IMR-90 (cell line): ENCODE measurements at regions of chr11 and their contacts with region 1.

Region 1: GRCh38 chr11:1148752-1149180 is 9.0 kb upstream of the MUC5AC start:
- DNase-seq: no peak
- ATAC-seq: no peak
- H3K4me3 ChIP-seq: no peak overlapping the region
- H3K27ac ChIP-seq: no peak overlapping the region
- H3K4me1 ChIP-seq: peaks cover 34% of the 10 kb centered on the region
- H3K27me3 ChIP-seq: no peaks in the 10 kb centered on the region
- CTCF ChIP-seq: no peak
- POLR2A ChIP-seq: no peak
- RAD21 ChIP-seq: no peak

Region 2: DNA sequence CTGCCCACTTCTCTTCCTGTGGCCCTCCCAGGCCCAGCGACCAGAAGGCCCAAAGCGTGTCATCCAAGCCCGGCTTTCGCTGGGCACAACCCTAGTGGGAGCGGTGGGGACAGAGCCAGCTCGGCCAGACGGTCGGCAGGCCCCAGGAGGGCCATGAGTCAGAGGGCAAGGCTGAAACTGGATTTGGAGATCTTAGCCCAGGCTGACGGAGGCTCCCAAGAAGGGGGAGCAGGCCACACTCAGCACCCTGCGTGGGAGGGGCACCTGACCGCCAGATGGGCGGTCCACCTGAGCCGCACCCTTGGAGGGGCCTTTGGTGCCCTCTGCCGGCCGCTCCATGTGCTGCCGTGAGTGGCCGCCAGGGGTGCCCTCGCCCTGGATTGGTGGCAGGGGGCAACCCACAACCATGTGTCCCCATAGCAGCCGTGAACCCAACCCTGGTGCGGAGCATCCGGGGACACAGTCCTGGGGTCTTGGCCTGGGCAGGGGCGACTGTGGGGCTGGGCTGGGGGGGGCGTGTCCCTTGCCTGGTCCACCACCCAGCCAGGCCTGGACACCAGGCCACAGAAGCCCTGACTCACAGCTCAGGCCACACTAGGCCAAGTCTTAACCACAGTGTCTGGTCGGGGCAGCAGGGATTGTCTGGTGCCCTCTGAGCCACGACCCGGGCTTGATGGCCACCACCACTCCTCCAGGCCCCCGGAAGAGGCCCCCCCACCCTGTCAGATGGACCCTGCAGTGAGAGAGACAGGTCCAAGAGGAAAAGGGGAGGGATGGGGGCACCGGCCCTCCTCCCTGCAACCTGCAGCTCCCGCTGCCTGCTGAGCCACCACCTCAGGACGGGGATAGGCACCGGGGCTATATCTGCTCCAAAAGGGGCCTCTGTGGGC is 420.7 kb before region 1 on chr11:
- CTCF ChIA-PET with region 1: no interaction called
- POLR2A ChIA-PET with region 1: no interaction called
- dilution Hi-C with region 1: no loop called
- in situ Hi-C with region 1: no loop called
- intact Hi-C with region 1: no loop called
- DNase-seq: peak; percentile 72
- ATAC-seq: peak; percentile 81
- H3K4me3 ChIP-seq: no peak overlapping the region
- H3K27ac ChIP-seq: no peak overlapping the region
- H3K4me1 ChIP-seq: peaks cover 6% of the 10 kb centered on the region
- H3K27me3 ChIP-seq: peaks cover 10% of the 10 kb centered on the region; the same call in 1 of the 2 replicates
- CTCF ChIP-seq: peak; percentile 99
- POLR2A ChIP-seq: no peak
- RAD21 ChIP-seq: peak; percentile 62

Region 3: DNA sequence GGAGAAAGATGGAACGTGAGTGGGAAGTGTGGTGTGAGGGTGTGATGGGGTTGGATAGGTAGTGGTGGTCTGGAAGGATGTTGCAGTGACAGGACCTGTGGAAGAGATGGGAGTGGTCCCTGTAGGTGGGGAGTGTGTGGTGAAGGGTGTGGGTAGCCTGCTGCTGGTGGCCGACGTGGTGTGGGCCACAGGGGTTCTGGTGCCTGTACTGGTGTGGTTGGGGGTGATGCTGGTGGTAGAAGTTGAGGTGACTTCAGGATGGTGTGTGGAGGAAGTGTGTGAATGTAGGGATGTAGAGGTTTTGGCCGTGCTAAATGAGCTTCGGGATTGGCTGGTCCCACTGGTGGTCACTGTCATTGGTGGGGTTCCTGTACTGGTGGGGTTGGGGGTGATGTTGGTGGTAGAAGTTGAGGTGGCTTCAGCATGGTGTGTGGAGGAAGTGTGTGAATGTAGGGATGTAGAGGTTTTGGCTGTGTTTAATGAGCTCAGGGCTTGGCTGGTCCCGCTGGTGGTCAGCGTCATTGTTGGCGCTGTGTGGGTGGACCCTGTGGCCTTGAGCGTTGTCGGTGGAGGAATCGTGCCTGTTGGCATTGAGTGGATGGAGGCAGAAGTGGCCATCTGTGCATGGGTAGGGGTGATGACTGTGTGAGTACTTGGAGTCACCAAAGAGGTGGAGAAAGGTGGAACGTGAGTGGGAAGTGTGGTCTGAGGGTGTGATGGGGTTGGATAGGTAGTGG is 131.3 kb before region 1 on chr11:
- CTCF ChIA-PET with region 1: no interaction called
- POLR2A ChIA-PET with region 1: no interaction called
- dilution Hi-C with region 1: no loop called
- in situ Hi-C with region 1: no loop called
- intact Hi-C with region 1: no loop called
- DNase-seq: no peak
- ATAC-seq: no peak
- H3K4me3 ChIP-seq: no peak overlapping the region
- H3K27ac ChIP-seq: no peak overlapping the region
- H3K4me1 ChIP-seq: no peaks in the 10 kb centered on the region
- H3K27me3 ChIP-seq: no peaks in the 10 kb centered on the region
- CTCF ChIP-seq: no peak
- POLR2A ChIP-seq: no peak
- RAD21 ChIP-seq: no peak

Region 4: DNA sequence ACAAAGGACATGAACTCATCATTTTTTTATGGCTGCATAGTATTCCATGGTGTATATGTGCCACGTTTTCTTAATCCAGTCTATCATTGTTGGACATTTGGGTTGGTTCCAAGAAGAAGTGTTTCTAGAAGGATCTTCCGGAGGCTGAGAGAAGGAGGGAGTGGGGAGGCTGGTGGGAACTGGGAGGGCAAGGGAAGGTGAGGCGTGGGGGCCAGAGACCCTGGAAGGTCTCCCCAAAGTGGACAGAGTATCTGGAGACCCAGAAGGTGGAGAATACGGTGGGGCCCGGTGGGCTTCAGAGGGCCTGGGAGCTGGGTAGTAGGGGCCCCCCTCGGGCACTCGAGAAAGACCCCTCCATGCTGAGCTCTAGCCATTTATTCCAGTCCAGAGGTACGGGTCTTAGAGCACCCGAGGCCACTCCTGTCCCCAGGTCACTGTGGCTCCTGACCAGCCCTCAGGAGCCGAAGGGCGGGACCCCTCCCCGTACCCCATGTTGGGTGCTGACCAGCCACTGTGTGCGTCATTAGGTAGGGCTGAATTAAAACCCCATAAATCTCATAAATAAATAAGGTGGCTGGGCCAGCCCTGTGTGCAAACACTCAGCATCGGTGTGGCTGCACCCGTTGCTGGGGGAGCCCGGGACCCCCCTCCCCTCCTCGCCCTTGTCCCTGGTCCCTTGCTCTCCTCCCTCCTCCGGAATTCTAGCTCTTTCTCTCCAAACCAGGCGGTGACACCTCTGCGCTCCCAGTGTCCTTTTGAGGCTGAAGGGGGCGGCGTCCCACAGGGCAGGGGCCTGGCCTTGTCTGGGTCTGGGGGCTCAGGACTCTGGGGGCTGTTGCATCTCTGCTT is 29.8 kb before region 1 on chr11:
- CTCF ChIA-PET with region 1: no interaction called
- POLR2A ChIA-PET with region 1: no interaction called
- dilution Hi-C with region 1: no loop called
- in situ Hi-C with region 1: no loop called
- intact Hi-C with region 1: loop called (anchors 1 kb)
- DNase-seq: no peak
- ATAC-seq: no peak
- H3K4me3 ChIP-seq: no peak overlapping the region
- H3K27ac ChIP-seq: no peak overlapping the region
- H3K4me1 ChIP-seq: no peaks in the 10 kb centered on the region
- H3K27me3 ChIP-seq: peaks cover 26% of the 10 kb centered on the region; the same call in 1 of the 2 replicates
- CTCF ChIP-seq: no peak
- POLR2A ChIP-seq: no peak
- RAD21 ChIP-seq: no peak

Region 5: DNA sequence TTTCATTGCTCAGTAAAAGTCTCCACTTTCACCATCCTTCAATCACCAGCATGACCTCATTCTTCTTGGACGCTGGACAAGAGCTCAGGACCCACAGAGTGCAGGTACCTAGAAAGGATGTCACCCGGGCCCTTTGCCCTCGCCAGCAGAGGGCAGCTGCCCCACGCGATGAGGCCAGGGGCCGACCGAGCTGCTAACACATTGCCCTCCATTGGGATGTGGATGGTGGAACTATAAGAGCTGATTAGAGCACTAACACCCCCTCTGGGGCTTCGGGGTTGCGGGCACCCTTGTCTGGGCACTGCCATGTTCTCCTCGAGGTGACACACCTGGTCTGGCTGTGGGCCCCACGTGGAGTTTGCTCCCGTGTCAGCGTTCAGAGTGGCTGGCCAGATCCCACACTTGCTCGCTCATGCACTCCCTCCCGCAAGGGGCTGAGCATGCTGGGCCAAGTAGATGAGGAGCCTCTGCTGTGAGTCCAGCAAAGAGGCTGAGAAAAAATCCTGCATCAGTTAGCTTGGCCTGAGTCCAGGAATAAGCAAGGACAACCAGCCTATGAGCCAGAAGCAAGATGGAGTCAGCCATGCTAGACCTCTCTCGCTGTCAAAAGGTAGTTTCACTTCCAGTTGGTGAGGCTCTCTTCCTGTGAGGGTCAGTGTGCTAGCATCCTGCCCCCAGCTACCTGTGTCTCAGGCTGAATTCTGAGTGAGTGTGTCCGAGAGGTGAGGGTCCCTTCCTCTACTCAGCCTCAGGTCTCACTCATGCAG is 558.1 kb after region 1 on chr11:
- CTCF ChIA-PET with region 1: no interaction called
- POLR2A ChIA-PET with region 1: no interaction called
- dilution Hi-C with region 1: no loop called
- in situ Hi-C with region 1: no loop called
- intact Hi-C with region 1: no loop called
- DNase-seq: no peak
- ATAC-seq: no peak
- H3K4me3 ChIP-seq: no peak overlapping the region
- H3K27ac ChIP-seq: no peak overlapping the region
- H3K4me1 ChIP-seq: no peaks in the 10 kb centered on the region
- H3K27me3 ChIP-seq: peaks cover 47% of the 10 kb centered on the region
- CTCF ChIP-seq: 0 out of 2 replicates have a peak, but pooled peaks have one; percentile 12
- POLR2A ChIP-seq: no peak
- RAD21 ChIP-seq: no peak